Panc1 (cell line): ENCODE measurements at regions of chr11 and their contacts with region 1.

Region 1: GRCh38 chr11:60985991-60986915 is 14.8 kb downstream of the CD6 start:
- DNase-seq: no peak
- ATAC-seq: peak; percentile 58; the same call in 1 of the 2 replicates
- H3K4me3 ChIP-seq: no peak overlapping the region
- H3K27ac ChIP-seq: no peak overlapping the region
- H3K4me1 ChIP-seq: no peaks in the 10 kb centered on the region
- H3K27me3 ChIP-seq: no peaks in the 10 kb centered on the region
- CTCF ChIP-seq: no peak

Region 2: GRCh38 chr11:60944490-60945294 is 41.6 kb before region 1 on chr11:
- CTCF ChIA-PET with region 1: interaction called, 14 read pairs
- POLR2A ChIA-PET with region 1: no interaction called
- in situ Hi-C with region 1: no loop called
- intact Hi-C with region 1: no loop called
- DNase-seq: no peak
- ATAC-seq: no peak
- H3K4me3 ChIP-seq: no peak overlapping the region
- H3K27ac ChIP-seq: no peak overlapping the region
- H3K4me1 ChIP-seq: no peaks in the 10 kb centered on the region
- H3K27me3 ChIP-seq: no peaks in the 10 kb centered on the region
- CTCF ChIP-seq: no peak